ENCODE measurements at regions of chr5 and their contacts with region 1.

Region 1: GRCh38 chr5:158875272-158875679 is 224.4 kb downstream of the EBF1 start:
- DNase-seq: no peak
- ATAC-seq: peak; percentile 40
- H3K4me3 ChIP-seq: peak overlapping the region; percentile 26 to 87
- H3K27ac ChIP-seq: peak overlapping the region in 1 of 2 donors; percentile 87
- H3K4me1 ChIP-seq: peaks cover 6 to 29% of the 10 kb centered on the region in 2 donors
- H3K27me3 ChIP-seq: no peaks in the 10 kb centered on the region

Region 2: DNA sequence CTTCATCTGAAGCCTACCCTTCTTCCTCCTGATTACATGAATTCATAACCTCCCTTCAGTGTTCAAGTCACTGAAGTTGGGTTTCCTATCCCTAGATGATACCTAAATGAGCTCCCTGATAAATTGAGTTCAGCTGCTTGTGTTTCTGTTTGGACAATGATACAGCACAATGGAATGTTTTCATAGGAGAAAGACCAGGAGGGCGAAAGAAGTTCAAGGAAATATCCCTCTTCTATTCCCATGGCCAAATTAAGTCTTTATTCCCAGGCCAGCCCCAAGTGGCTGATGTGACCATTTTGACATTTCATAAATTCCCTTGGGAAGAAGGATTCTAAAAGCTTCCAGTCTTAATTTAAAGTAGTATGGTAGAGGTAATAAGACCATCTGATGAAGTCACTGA is 460.5 kb before region 1 on chr5:
- intact Hi-C with region 1: loop called in 1 of 2 experiments (anchors 10 kb)
- DNase-seq: no peak
- ATAC-seq: peak; percentile 76
- H3K4me3 ChIP-seq: no peak overlapping the region
- H3K27ac ChIP-seq: peak overlapping the region in 1 of 2 donors; percentile 21
- H3K4me1 ChIP-seq: peaks cover 0 to 5% of the 10 kb centered on the region in 2 donors
- H3K27me3 ChIP-seq: no peaks in the 10 kb centered on the region

Region 3: DNA sequence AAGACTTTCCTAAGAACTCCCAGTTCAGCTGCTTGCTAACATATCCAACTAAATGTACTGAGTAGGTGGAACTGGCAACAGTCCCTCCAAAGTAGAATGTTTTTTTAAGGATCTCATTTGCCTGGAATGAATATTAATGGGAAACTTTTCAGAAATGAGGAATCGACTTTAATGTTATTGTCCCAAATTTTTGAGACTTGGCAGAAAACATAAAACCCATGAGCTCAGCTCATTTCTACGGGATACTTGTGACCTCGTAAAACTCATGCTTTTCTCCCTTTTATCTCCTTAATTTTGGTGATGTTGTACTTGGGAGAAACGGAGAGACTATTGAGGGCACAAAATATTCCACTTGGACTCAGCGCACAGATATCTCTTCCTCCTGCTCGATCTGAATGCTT is 72.3 kb before region 1 on chr5:
- intact Hi-C with region 1: loop called in 1 of 2 experiments (anchors 5 kb)
- DNase-seq: no peak
- ATAC-seq: peak; percentile 69
- H3K4me3 ChIP-seq: peak overlapping the region in 1 of 2 donors; percentile 41
- H3K27ac ChIP-seq: peak overlapping the region; percentile 82 to 93
- H3K4me1 ChIP-seq: peaks cover 2 to 8% of the 10 kb centered on the region in 2 donors
- H3K27me3 ChIP-seq: no peaks in the 10 kb centered on the region

Region 4: GRCh38 chr5:159010661-159011442 is 135.6 kb after region 1 on chr5:
- intact Hi-C with region 1: no loop called
- DNase-seq: peak in 1 of 2 donors; percentile 50
- ATAC-seq: no peak
- H3K4me3 ChIP-seq: no peak overlapping the region
- H3K27ac ChIP-seq: peak overlapping the region; percentile 55 to 57
- H3K4me1 ChIP-seq: peaks cover 2 to 14% of the 10 kb centered on the region in 2 donors
- H3K27me3 ChIP-seq: no peaks in the 10 kb centered on the region

Measured in aorta (tissue), 5 donors.